Left colon (tissue), 2 donors: ENCODE measurements at regions of chr5 and their contacts with region 1.

Region 1: GRCh38 chr5:88729084-88729828 is 153.7 kb downstream of the MEF2C start:
- DNase-seq: peak; percentile 42 to 69
- ATAC-seq: peak; percentile 85

Region 2: GRCh38 chr5:88660947-88661805 is 68.1 kb before region 1 on chr5:
- intact Hi-C with region 1: no loop called
- DNase-seq: peak; percentile 50 to 54
- ATAC-seq: peak; percentile 80

Region 3: GRCh38 chr5:88836195-88836838 is 107.1 kb after region 1 on chr5:
- intact Hi-C with region 1: no loop called
- DNase-seq: no peak
- ATAC-seq: no peak

Region 4: GRCh38 chr5:88883059-88883835 is 154.0 kb after region 1 on chr5 and contains the start of gene MEF2C:
- intact Hi-C with region 1: loop called in 1 of 2 experiments (anchors 10 kb)
- DNase-seq: peak; percentile 67 to 71
- ATAC-seq: peak; percentile 79
- total RNA-seq, gene MEF2C: 10.0 to 27.4 TPM

Region 5: DNA sequence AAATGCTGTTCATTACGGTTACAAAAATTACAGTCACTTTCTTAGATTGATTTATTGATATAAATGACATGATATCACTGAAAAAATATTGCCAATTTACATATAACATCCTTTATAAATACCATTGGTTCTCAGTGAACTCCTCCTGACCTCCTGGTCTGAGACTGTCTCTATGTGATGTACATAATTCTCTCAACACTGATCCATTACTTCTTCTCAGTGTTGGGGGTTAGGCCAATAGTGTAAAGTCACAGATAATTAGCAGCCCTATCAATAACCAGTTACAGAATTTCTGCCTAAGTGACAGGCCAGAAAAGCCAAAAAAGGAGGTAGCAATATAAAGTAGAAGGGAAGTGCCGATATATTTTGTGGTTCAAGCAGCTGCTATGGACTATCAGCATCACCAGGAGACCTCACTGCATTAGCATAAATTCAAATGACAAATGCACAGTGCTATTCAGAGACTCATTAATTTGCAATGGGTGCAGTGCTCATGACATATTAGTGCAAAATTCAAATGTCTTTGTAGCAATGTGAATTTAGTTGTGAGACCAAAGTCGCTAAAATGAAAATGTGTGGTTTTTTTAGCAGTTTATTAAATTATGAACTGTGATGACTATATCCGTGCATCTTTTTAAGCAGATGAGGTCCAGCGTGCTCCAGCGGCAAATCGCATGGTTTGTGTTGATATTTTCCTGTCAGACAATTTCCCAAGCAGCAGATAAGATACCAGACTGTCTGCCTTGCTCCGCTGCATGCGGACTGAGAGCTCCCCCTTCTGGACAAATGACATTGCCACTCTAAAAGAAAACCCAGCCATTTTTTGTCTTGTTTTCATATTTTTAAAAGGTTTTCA is 1535.7 kb after region 1 on chr5:
- intact Hi-C with region 1: loop called in 1 of 2 experiments (anchors 5 kb)
- DNase-seq: peak; percentile 39 to 55
- ATAC-seq: peak; percentile 66